HEK293 (cell line): ENCODE measurements at regions of chr17 and their contacts with region 1.

Region 1: GRCh38 chr17:65231662-65232335 is 94.6 kb downstream of the RGS9 start:
- H3K4me3 ChIP-seq: no peak overlapping the region
- H3K27ac ChIP-seq: no peak overlapping the region
- H3K4me1 ChIP-seq: peaks cover 2% of the 10 kb centered on the region; the same call in 1 of the 2 replicates
- CTCF ChIP-seq: peak; percentile 78

Region 2: GRCh38 chr17:65202844-65203571 is 28.8 kb before region 1 on chr17:
- CTCF ChIA-PET with region 1: no interaction called
- POLR2A ChIA-PET with region 1: no interaction called
- H3K4me3 ChIP-seq: no peak overlapping the region
- H3K27ac ChIP-seq: no peak overlapping the region
- H3K4me1 ChIP-seq: no peaks in the 10 kb centered on the region
- CTCF ChIP-seq: no peak

Region 3: DNA sequence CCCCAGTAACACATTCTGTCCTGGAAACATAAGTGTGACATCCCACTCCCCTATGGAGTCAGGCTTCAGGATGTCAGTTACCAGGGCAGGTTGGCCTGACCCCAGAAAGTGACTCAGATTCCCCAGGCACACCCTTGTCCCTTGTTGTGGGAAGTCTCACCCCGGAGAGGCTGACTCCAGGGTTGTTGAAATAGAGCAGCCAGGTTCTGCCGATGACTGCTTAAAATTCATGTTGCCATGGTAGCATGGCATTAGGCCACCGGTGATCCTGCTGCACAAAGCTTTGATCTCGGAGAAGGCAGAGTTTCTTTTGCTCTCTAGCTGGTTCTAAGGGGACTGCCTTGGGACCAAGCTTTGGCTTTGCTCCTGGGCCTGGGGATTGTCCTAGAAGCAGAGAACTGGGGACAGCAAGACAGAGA is 12.0 kb after region 1 on chr17:
- CTCF ChIA-PET with region 1: interaction called, 11 read pairs
- POLR2A ChIA-PET with region 1: interaction called, 3 read pairs
- H3K4me3 ChIP-seq: no peak overlapping the region
- H3K27ac ChIP-seq: no peak overlapping the region
- H3K4me1 ChIP-seq: peaks cover 3% of the 10 kb centered on the region; the same call in 1 of the 2 replicates
- CTCF ChIP-seq: no peak

Region 4: DNA sequence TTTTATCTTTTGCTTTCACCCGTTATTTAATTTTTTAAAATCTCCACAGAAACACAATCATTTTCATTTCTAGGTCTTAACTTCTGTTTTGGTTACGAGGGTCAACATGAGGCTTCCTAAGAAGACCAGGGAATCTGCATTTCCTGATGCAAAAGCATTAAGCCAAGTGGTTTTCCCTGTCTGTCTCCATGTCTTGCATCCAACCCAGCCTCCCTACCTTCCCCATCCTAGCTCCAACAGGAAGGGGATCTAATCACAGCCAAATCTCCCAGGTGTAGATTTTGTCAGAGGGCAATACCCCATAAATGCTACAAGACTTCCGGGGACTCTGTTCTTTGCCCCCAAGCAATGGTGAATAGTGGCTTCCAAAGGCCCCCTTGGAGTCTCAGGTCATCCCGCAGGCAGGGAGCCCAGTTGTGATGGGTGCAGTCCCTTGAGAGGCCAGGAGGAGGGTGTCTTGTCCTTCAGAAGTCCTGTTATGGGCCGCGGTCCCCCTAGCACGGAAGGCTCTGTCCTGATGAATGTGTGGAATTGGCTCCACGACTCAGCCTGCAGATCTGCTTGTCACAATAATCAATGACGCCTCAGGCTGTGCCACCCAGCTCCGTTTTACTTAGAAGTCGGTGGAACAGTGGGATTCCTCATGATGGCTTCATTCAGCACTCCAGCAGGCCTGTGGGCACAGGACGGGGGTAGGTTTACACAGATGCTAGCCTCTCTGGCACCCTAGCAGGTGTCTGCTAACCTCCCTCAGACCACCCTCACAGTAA is 46.4 kb after region 1 on chr17:
- CTCF ChIA-PET with region 1: interaction called, 19 read pairs
- POLR2A ChIA-PET with region 1: no interaction called
- H3K4me3 ChIP-seq: no peak overlapping the region
- H3K27ac ChIP-seq: no peak overlapping the region
- H3K4me1 ChIP-seq: no peaks in the 10 kb centered on the region
- CTCF ChIP-seq: peak; percentile 67

Region 5: DNA sequence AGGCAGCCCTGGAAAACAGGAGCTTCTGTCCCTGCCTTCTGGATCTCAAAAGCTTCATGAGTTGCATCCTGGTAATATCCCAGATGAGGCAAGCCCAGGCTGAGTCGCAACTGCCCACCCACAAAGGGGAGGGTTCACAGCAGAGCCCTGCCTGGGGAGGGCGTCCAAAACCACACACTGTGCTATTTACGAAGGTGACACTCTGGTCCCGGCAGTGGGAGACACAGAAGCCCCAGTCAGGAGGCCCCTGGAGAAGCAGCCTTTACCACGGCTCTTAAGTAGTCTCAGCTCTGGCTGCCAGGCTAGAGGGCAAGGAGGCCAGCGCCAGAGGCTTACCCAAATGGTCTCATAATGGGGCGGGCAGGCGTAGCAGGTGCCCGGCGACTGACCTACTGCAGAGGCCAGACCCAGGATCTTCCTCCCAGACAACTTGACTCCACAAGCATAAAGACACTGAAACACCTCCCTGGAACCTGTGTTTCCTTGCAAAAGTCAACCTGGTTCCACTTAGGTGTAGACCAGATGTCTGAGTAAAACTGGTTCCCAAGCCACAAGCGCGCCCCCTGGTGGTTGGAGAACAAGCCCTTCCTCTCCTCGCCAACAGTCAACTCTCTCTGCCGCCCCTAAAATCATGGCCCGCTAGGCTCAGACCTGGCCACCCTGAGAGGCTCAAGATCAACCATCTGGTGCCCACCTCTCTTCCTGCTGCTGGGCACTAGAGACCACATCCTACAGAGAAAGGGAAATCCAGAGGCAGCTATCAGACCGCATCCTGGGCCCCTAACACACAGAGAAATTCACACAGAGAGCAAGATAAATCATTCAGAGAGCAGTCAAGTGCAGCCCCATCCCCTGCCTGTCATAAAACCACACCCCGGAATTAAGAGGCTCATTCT is 324.5 kb after region 1 on chr17:
- CTCF ChIA-PET with region 1: interaction called, 13 read pairs
- POLR2A ChIA-PET with region 1: no interaction called
- H3K4me3 ChIP-seq: no peak overlapping the region
- H3K27ac ChIP-seq: no peak overlapping the region
- H3K4me1 ChIP-seq: peaks cover 23% of the 10 kb centered on the region
- CTCF ChIP-seq: peak; percentile 86

Region 6: DNA sequence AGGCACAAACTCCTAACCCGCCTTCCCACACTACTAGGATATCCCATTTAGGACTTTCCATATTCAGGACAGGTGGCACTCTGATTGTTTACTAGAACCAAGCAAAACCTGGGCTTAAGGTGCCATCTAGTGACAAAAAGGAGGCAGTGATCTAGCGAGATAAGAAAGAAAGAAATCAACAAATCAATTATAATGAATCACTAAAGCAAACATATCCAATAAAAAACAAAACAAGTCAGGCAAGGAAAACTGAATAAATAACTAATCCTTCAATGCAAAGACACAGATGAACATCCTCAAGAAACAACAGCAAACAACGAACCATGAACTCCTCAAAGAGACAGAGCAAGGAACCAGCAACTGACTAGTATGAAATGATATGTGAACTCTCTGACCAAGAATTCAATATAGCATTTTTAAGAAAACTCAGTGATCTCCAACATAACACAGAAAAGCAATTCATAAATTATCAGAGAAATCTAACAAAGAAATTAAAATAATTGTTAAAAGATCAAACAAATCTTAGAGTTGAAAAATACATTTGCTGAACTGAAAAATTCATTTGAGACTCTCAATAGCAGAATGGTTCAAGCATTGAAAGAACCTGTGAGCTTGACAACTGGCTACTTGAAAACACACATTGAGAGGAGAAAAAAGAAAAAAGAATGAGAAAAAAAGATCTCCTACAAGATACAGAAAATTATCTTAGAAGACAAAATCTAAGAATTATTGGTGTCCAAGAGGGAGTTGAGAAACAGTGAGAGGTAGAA is 756.5 kb after region 1 on chr17:
- CTCF ChIA-PET with region 1: interaction called, 14 read pairs
- POLR2A ChIA-PET with region 1: no interaction called
- H3K4me3 ChIP-seq: no peak overlapping the region
- H3K27ac ChIP-seq: no peak overlapping the region
- H3K4me1 ChIP-seq: no peaks in the 10 kb centered on the region
- CTCF ChIP-seq: 0 out of 2 replicates have a peak, but pooled peaks have one; percentile 22